ENCODE measurements at regions of chr11 and their contacts with region 1.

Region 1: GRCh38 chr11:62421996-62422395 is 3.2 kb downstream of the SCGB1A1 start:
- DNase-seq: no peak
- ATAC-seq: no peak
- H3K4me3 ChIP-seq: no peak overlapping the region
- H3K27ac ChIP-seq: no peak overlapping the region
- H3K4me1 ChIP-seq: no peaks in the 10 kb centered on the region
- H3K27me3 ChIP-seq: no peaks in the 10 kb centered on the region
- CTCF ChIP-seq: no peak

Region 2: GRCh38 chr11:62217191-62217748 is 204.7 kb before region 1 on chr11:
- intact Hi-C with region 1: no loop called
- DNase-seq: no peak
- ATAC-seq: no peak
- H3K4me3 ChIP-seq: no peak overlapping the region
- H3K27ac ChIP-seq: no peak overlapping the region
- H3K4me1 ChIP-seq: no peaks in the 10 kb centered on the region
- H3K27me3 ChIP-seq: no peaks in the 10 kb centered on the region
- CTCF ChIP-seq: no peak

Region 3: DNA sequence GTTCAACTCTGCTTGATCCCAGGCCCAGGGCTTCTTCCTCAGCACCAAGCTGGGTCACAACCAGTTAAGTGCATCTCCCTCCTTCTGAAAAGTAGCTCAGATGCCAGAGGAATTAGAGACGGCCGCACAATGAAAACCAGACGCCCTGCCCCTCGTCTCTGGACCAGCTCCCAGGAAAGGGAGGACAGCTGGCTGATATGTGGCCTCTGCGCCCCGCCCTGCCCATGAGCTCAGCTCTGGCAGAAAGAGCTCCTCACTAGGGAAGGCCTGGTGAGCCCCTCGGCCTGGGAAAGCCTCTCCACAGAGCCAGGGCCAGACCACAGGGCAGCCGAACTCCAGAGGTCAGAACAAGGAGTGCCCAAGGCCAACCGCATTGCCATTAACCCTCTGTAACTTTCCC is 21.2 kb before region 1 on chr11:
- intact Hi-C with region 1: no loop called
- DNase-seq: peak; percentile 72
- ATAC-seq: peak; percentile 47
- H3K4me3 ChIP-seq: no peak overlapping the region
- H3K27ac ChIP-seq: peak overlapping the region; percentile 70
- H3K4me1 ChIP-seq: peaks cover 58% of the 10 kb centered on the region
- H3K27me3 ChIP-seq: no peaks in the 10 kb centered on the region
- CTCF ChIP-seq: no peak

Region 4: GRCh38 chr11:62567018-62567633 is 145.1 kb after region 1 on chr11:
- intact Hi-C with region 1: loop called (anchors 5 kb)
- DNase-seq: no peak
- ATAC-seq: no peak
- H3K4me3 ChIP-seq: no peak overlapping the region
- H3K27ac ChIP-seq: no peak overlapping the region
- H3K4me1 ChIP-seq: peaks cover 5% of the 10 kb centered on the region
- H3K27me3 ChIP-seq: no peaks in the 10 kb centered on the region
- CTCF ChIP-seq: no peak

Measured in upper lobe of right lung (tissue), 1 donor.